ENCODE measurements at regions of chr14 and their contacts with region 1.

Region 1: DNA sequence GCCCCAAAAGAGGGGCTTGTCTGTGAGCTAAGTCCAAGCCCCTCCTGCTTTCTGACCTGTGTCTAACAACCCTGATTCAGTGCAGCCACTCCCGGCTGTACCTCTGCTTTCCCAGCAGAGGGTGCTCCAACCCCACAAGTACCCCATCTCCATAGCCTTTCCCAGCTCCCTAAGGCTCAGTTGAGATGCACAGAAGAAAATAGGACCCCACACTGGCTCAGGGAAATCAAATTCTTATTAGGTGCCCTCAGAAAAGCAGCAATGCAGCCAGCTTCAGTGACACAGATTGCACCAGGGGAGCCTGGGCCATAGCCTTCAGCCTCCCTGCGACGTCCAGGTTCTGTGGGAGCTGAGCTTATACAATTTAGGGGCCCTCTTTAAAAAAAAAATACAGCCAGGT is 49.9 kb downstream of the LRRC74A start:
- DNase-seq: peak; percentile 80 to 86
- ATAC-seq: peak; percentile 91 to 94
- H3K4me3 ChIP-seq: no peak overlapping the region
- H3K27ac ChIP-seq: peak overlapping the region; percentile 57 to 69
- H3K4me1 ChIP-seq: peaks cover 4% of the 10 kb centered on the region; the same call in 1 of the 3 replicates
- CTCF ChIP-seq: peak; percentile 96
- EP300 ChIP-seq: no peak
- POLR2A ChIP-seq: no peak
- RAD21 ChIP-seq: peak; percentile 99 to 100

Region 2: DNA sequence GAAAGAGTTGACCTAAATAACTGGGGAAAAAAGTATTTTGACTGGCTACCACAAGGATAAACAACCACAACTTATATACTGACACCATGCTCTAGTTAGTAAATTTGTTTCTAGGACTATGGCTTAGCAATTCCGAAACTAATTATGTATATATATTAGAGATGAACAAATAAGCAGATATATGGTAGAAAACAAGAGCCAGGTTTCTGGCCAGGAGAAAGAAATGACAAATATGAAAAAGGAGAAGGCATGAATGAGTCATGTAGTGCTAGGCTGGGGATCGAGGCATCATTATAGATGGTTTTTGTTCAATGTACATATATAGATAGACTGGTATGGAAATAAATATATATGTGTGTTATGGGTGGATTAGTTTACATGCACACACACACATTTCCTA is 55.4 kb before region 1 on chr14:
- CTCF ChIA-PET with region 1: no interaction called
- POLR2A ChIA-PET with region 1: no interaction called
- DNase-seq: no peak
- ATAC-seq: no peak
- H3K4me3 ChIP-seq: no peak overlapping the region
- H3K27ac ChIP-seq: no peak overlapping the region
- H3K4me1 ChIP-seq: no peaks in the 10 kb centered on the region
- CTCF ChIP-seq: no peak
- EP300 ChIP-seq: no peak
- POLR2A ChIP-seq: no peak
- RAD21 ChIP-seq: no peak

Region 3: GRCh38 chr14:76904740-76905438 is 28.8 kb after region 1 on chr14:
- CTCF ChIA-PET with region 1: interaction called, 716 read pairs
- POLR2A ChIA-PET with region 1: interaction called, 5 read pairs
- DNase-seq: peak; percentile 96 to 99
- ATAC-seq: peak; percentile 85 to 89
- H3K4me3 ChIP-seq: peak overlapping the region; percentile 30
- H3K27ac ChIP-seq: peak overlapping the region; percentile 96 to 97
- H3K4me1 ChIP-seq: peaks cover 48% of the 10 kb centered on the region
- CTCF ChIP-seq: no peak
- EP300 ChIP-seq: peak; percentile 91 to 97
- POLR2A ChIP-seq: no peak
- RAD21 ChIP-seq: peak; percentile 1 to 48; a peak in 3 of 5 replicates

Region 4: DNA sequence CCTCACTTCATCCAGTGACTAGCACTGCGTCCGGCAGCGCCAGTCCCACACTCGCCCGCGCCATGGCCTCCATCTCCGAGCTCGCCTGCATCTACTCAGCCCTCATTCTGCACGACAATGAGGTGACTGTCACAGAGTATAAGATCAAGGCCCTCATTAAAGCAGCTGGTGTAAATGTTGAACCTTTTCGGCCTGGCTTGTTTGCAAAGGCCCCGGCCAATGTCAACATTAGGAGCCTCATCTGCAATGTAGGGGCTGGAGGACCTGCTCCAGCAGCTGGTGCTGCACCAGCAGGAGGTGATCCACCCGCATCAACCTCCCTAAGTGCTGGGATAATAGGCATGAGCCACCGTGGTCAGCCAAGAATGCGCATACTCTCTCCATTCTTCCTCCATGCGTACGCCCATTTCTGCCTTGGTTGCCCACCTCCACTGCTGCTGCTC is 92.6 kb after region 1 on chr14:
- CTCF ChIA-PET with region 1: interaction called, 15 read pairs
- POLR2A ChIA-PET with region 1: no interaction called
- DNase-seq: no peak
- ATAC-seq: no peak; a peak in 1 of 6 replicates
- H3K4me3 ChIP-seq: no peak overlapping the region
- H3K27ac ChIP-seq: peak overlapping the region in 1 of 2 experiments; percentile 29; a peak in 1 of 6 replicates
- H3K4me1 ChIP-seq: no peaks in the 10 kb centered on the region
- CTCF ChIP-seq: no peak
- EP300 ChIP-seq: no peak
- POLR2A ChIP-seq: no peak
- RAD21 ChIP-seq: no peak

Region 5: DNA sequence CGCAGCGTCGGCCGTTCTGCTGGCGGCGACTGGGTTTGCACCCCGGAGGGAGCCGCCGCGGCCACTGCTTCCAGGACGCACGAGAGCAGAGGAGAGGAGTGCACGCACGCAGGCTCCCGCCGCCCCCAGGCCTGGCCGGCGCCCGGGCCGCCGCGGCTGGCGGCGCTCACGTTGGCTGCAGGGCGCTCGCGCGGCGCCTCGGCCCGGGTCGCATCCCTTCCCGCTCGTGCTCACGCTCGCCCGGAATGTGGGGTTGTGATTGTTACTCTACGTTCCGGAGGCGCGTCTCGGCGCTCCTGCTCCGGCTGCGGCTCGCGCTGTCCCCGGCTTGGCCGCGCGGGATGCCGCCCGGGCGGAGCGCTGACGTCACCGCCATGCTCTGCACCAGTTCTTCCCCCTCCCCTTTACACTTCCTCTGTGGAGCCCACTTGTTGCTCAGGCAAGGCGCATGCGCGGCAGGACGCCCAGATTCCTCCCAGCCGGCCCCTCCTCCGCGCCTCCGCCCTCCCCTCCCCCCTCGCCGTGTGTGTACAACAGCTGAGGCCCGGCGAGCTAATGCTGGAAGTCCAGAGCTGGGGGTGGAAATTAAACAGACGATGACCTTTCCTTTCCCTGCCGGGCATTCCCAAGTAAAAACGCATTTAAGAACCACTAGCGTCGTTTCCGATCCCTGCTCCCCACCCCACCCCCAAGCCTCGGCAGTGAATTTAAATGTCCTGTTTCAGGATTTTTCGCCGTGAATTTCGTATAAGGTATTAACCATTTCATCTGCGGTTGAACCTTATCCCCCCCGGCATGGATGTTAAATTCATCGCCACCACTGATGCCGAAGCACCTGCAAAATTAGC is 152.5 kb after region 1 on chr14 and contains the start of gene IRF2BPL:
- CTCF ChIA-PET with region 1: interaction called, 67 read pairs
- POLR2A ChIA-PET with region 1: interaction called, 4 read pairs
- DNase-seq: peak; percentile 94 to 99
- ATAC-seq: peak; percentile 46 to 48
- H3K4me3 ChIP-seq: peak within 1 kb of the TSS; percentile 78
- H3K27ac ChIP-seq: peak within 1 kb of the TSS; percentile 95 to 99
- H3K4me1 ChIP-seq: peaks cover 49% of the 10 kb centered on the region
- CTCF ChIP-seq: no peak
- EP300 ChIP-seq: peak; percentile 83 to 94
- POLR2A ChIP-seq: peak; percentile 86
- RAD21 ChIP-seq: peak; percentile 31 to 61; a peak in 4 of 5 replicates
- polyA plus RNA-seq, gene IRF2BPL: 12.5 and 18.1 TPM in 2 replicates

Region 6: GRCh38 chr14:77059276-77059915 is 183.3 kb after region 1 on chr14:
- CTCF ChIA-PET with region 1: interaction called, 116 read pairs
- POLR2A ChIA-PET with region 1: no interaction called
- DNase-seq: peak; percentile 51 to 66
- ATAC-seq: peak; percentile 87 to 93
- H3K4me3 ChIP-seq: no peak overlapping the region
- H3K27ac ChIP-seq: peak overlapping the region; percentile 31 to 77; a peak in 4 of 6 replicates
- H3K4me1 ChIP-seq: peaks cover 11% of the 10 kb centered on the region; the same call in 2 of the 3 replicates
- CTCF ChIP-seq: no peak
- EP300 ChIP-seq: no peak
- POLR2A ChIP-seq: no peak
- RAD21 ChIP-seq: peak; percentile 35 to 54; a peak in 3 of 5 replicates

Region 7: DNA sequence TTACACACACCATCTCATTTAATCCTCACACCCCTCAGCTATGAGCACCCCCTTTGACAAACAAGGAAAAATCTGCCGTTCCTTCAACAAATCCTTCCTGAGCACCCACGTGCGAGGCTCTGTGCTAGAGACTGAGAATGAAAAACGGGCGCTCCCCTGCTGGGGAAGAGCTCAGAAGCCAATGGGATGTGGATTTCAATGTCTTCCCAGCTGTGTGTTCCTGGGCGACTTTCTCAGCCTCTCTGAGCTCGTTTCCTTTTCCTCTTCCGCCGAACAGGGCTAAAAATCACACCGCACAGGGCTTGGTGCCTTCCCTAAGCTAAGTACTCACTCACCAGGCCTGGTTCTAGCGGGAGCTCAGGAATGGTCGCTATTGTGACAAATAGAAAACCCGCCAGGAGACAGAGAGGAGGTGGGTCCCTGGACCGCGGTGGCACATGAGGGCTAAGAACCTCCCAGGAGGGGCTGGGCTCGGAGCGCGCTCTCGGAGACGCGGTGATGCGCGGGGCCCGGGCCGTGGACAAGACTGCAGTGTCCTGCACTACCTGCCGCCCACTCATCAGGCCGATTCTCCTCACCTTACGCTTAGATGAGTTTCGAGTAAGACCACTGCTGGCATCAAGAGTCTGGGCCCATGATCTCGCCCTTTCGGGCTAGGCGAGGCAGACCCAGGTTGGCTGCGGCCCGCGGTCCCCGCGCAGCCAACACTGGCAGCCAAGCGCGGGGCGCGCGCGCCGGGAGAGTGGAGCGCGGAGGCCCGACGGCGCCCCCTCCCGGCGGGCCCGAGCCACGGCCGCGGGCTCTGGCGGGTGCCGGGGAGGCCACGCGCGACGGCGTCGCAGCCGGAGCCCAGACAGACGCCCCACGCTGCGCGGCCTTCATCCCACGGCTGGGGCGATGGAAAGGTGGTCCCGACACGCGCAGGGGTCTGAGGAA is 248.5 kb after region 1 on chr14:
- CTCF ChIA-PET with region 1: interaction called, 84 read pairs
- POLR2A ChIA-PET with region 1: no interaction called
- DNase-seq: peak in 1 of 2 experiments; percentile 48
- ATAC-seq: peak; percentile 76 to 90
- H3K4me3 ChIP-seq: peak overlapping the region; percentile 47
- H3K27ac ChIP-seq: peak overlapping the region; percentile 62 to 84
- H3K4me1 ChIP-seq: peaks cover 15% of the 10 kb centered on the region; the same call in 2 of the 3 replicates
- CTCF ChIP-seq: peak; percentile 92
- EP300 ChIP-seq: no peak
- POLR2A ChIP-seq: peak; percentile 60
- RAD21 ChIP-seq: peak in 1 of 2 experiments; percentile 51; a peak in 2 of 5 replicates

Region 8: GRCh38 chr14:77151918-77152588 is 276.0 kb after region 1 on chr14:
- CTCF ChIA-PET with region 1: interaction called, 89 read pairs
- POLR2A ChIA-PET with region 1: no interaction called
- DNase-seq: peak; percentile 42 to 83
- ATAC-seq: peak; percentile 84 to 91; a peak in 5 of 6 replicates
- H3K4me3 ChIP-seq: no peak overlapping the region
- H3K27ac ChIP-seq: no peak overlapping the region
- H3K4me1 ChIP-seq: no peaks in the 10 kb centered on the region
- CTCF ChIP-seq: peak; percentile 68
- EP300 ChIP-seq: no peak
- POLR2A ChIP-seq: no peak
- RAD21 ChIP-seq: peak; percentile 74 to 75

Measured in A549 (cell line).